IMR-90 (cell line): ENCODE measurements at regions of chr6 and their contacts with region 1.

Region 1: DNA sequence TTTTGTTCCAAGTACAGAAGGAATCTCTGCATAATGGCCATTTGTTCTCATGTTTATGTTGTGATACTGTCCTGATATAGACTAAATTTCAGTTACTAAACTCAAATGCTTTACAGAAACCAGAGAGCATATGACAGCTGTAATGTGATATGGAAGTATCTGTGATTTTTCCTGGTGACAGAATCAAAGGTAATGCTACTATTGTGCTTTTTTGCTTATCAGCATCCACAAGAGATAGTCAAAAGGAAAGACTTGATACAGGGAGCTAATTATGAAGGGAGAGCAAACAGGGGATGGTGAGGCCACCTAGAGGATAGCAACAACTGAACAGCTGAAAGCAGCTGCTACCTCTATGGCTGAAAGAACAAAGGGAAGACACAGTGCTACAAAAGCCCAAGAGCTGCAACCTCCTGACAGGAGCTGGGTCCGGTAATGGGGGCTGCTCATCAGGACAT is 181.4 kb downstream of the PHF3 start:
- DNase-seq: peak; percentile 27
- ATAC-seq: peak; percentile 73
- H3K4me3 ChIP-seq: no peak overlapping the region
- H3K27ac ChIP-seq: no peak overlapping the region
- H3K4me1 ChIP-seq: peaks cover 9% of the 10 kb centered on the region
- H3K27me3 ChIP-seq: no peaks in the 10 kb centered on the region
- CTCF ChIP-seq: no peak
- POLR2A ChIP-seq: no peak
- RAD21 ChIP-seq: peak; percentile 18; the same call in 1 of the 2 replicates

Region 2: DNA sequence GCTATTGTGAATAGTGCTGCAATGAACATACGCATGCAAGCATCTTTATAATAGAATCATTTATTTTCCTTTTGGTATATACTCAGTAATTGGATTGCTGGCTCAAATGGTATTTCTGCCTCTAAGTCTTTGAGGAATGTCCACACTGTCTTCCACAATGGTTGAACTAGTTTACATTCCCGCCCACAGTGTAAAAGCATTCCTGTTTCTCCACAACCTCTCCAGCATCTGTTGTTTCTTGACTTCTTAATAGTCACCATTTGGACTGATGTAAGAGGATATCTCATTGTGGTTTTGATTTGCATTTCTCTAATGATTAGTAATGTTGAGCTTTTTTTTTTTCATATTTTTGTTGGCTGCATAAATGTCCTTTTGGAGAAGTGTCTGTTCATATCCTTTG is 27.3 kb after region 1 on chr6:
- CTCF ChIA-PET with region 1: no interaction called
- POLR2A ChIA-PET with region 1: no interaction called
- dilution Hi-C with region 1: no loop called
- in situ Hi-C with region 1: no loop called
- intact Hi-C with region 1: no loop called
- DNase-seq: peak; percentile 96
- ATAC-seq: peak; percentile 69
- H3K4me3 ChIP-seq: no peak overlapping the region
- H3K27ac ChIP-seq: no peak overlapping the region; the same call in 1 of the 2 replicates
- H3K4me1 ChIP-seq: peaks cover 4% of the 10 kb centered on the region
- H3K27me3 ChIP-seq: no peaks in the 10 kb centered on the region
- CTCF ChIP-seq: no peak
- POLR2A ChIP-seq: no peak
- RAD21 ChIP-seq: no peak

Region 3: GRCh38 chr6:63899550-63899949 is 82.5 kb after region 1 on chr6:
- CTCF ChIA-PET with region 1: no interaction called
- POLR2A ChIA-PET with region 1: no interaction called
- dilution Hi-C with region 1: no loop called
- in situ Hi-C with region 1: no loop called
- intact Hi-C with region 1: loop called (anchors 5 kb)
- DNase-seq: peak; percentile 68
- ATAC-seq: peak; percentile 71
- H3K4me3 ChIP-seq: no peak overlapping the region
- H3K27ac ChIP-seq: no peak overlapping the region
- H3K4me1 ChIP-seq: peaks cover 10% of the 10 kb centered on the region
- H3K27me3 ChIP-seq: no peaks in the 10 kb centered on the region
- CTCF ChIP-seq: no peak
- POLR2A ChIP-seq: no peak
- RAD21 ChIP-seq: no peak

Region 4: GRCh38 chr6:63923139-63923739 is 106.2 kb after region 1 on chr6:
- CTCF ChIA-PET with region 1: no interaction called
- POLR2A ChIA-PET with region 1: no interaction called
- dilution Hi-C with region 1: no loop called
- in situ Hi-C with region 1: no loop called
- intact Hi-C with region 1: loop called (anchors 5 kb)
- DNase-seq: peak; percentile 51
- ATAC-seq: peak; percentile 92
- H3K4me3 ChIP-seq: no peak overlapping the region
- H3K27ac ChIP-seq: no peak overlapping the region
- H3K4me1 ChIP-seq: no peaks in the 10 kb centered on the region
- H3K27me3 ChIP-seq: no peaks in the 10 kb centered on the region
- CTCF ChIP-seq: peak; percentile 76
- POLR2A ChIP-seq: no peak
- RAD21 ChIP-seq: peak; percentile 70

Region 5: GRCh38 chr6:63963769-63964315 is 146.8 kb after region 1 on chr6:
- CTCF ChIA-PET with region 1: no interaction called
- POLR2A ChIA-PET with region 1: no interaction called
- dilution Hi-C with region 1: no loop called
- in situ Hi-C with region 1: no loop called
- intact Hi-C with region 1: no loop called
- DNase-seq: no peak
- ATAC-seq: no peak
- H3K4me3 ChIP-seq: no peak overlapping the region
- H3K27ac ChIP-seq: no peak overlapping the region
- H3K4me1 ChIP-seq: no peaks in the 10 kb centered on the region
- H3K27me3 ChIP-seq: no peaks in the 10 kb centered on the region
- CTCF ChIP-seq: 0 out of 2 replicates have a peak, but pooled peaks have one; percentile 5
- POLR2A ChIP-seq: no peak
- RAD21 ChIP-seq: no peak

Region 6: DNA sequence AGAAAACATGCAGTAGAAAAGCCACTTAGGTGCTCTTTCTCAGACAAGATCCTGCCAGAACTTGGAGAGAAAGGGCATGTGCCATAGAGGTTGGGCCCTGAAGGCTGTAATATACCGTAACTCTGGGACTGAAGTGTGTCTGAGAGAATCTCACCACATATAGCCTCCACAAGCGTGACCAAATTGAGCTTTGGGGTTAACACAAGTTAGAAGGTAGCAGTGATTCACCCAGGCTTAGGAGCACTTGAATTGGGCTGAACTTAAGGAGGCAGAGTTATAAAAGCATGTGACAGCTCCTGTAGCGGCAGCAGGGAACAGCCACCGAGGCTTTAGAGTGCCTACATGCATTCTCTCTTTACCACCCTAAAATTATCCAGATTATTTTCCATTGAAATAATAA is 180.2 kb after region 1 on chr6:
- CTCF ChIA-PET with region 1: no interaction called
- POLR2A ChIA-PET with region 1: no interaction called
- dilution Hi-C with region 1: no loop called
- in situ Hi-C with region 1: no loop called
- intact Hi-C with region 1: loop called (anchors 10 kb)
- DNase-seq: no peak
- ATAC-seq: no peak
- H3K4me3 ChIP-seq: no peak overlapping the region
- H3K27ac ChIP-seq: no peak overlapping the region
- H3K4me1 ChIP-seq: no peaks in the 10 kb centered on the region
- H3K27me3 ChIP-seq: no peaks in the 10 kb centered on the region
- CTCF ChIP-seq: no peak
- POLR2A ChIP-seq: no peak
- RAD21 ChIP-seq: no peak

Region 7: GRCh38 chr6:64330694-64331307 is 513.8 kb after region 1 on chr6:
- CTCF ChIA-PET with region 1: no interaction called
- POLR2A ChIA-PET with region 1: no interaction called
- dilution Hi-C with region 1: no loop called
- in situ Hi-C with region 1: no loop called
- intact Hi-C with region 1: loop called (anchors 10 kb)
- DNase-seq: peak; percentile 77
- ATAC-seq: peak; percentile 91
- H3K4me3 ChIP-seq: no peak overlapping the region
- H3K27ac ChIP-seq: no peak overlapping the region
- H3K4me1 ChIP-seq: no peaks in the 10 kb centered on the region
- H3K27me3 ChIP-seq: no peaks in the 10 kb centered on the region
- CTCF ChIP-seq: peak; percentile 82
- POLR2A ChIP-seq: no peak
- RAD21 ChIP-seq: peak; percentile 87